GM12878 (cell line): ENCODE measurements at regions of chr12 and their contacts with region 1.

Region 1: GRCh38 chr12:100827901-100828520 is 33.4 kb downstream of the ANO4 start:
- DNase-seq: no peak
- ATAC-seq: peak; percentile 63
- H3K4me3 ChIP-seq: no peak overlapping the region
- H3K27ac ChIP-seq: no peak overlapping the region
- H3K4me1 ChIP-seq: no peaks in the 10 kb centered on the region
- H3K27me3 ChIP-seq: no peaks in the 10 kb centered on the region
- CTCF ChIP-seq: peak; percentile 64 to 78 (median 74)
- EP300 ChIP-seq: no peak
- POLR2A ChIP-seq: no peak
- RAD21 ChIP-seq: peak; percentile 85

Region 2: GRCh38 chr12:100987552-100988521 is 159.8 kb after region 1 on chr12:
- CTCF ChIA-PET with region 1: no interaction called
- POLR2A ChIA-PET with region 1: no interaction called
- RAD21 ChIA-PET with region 1: no interaction called
- SMC1A ChIA-PET with region 1: no interaction called
- in situ Hi-C with region 1: no loop called
- intact Hi-C with region 1: loop called (anchors 5 kb)
- DNase-seq: peak; percentile 83
- ATAC-seq: peak; percentile 96
- H3K4me3 ChIP-seq: no peak overlapping the region
- H3K27ac ChIP-seq: no peak overlapping the region
- H3K4me1 ChIP-seq: peaks cover 11% of the 10 kb centered on the region; the same call in 1 of the 2 replicates
- H3K27me3 ChIP-seq: no peaks in the 10 kb centered on the region; a peak in 1 of 4 replicates
- CTCF ChIP-seq: peak; percentile 43 to 73 (median 51)
- EP300 ChIP-seq: peak; percentile 73 to 89
- POLR2A ChIP-seq: no peak
- RAD21 ChIP-seq: peak; percentile 58

Region 3: DNA sequence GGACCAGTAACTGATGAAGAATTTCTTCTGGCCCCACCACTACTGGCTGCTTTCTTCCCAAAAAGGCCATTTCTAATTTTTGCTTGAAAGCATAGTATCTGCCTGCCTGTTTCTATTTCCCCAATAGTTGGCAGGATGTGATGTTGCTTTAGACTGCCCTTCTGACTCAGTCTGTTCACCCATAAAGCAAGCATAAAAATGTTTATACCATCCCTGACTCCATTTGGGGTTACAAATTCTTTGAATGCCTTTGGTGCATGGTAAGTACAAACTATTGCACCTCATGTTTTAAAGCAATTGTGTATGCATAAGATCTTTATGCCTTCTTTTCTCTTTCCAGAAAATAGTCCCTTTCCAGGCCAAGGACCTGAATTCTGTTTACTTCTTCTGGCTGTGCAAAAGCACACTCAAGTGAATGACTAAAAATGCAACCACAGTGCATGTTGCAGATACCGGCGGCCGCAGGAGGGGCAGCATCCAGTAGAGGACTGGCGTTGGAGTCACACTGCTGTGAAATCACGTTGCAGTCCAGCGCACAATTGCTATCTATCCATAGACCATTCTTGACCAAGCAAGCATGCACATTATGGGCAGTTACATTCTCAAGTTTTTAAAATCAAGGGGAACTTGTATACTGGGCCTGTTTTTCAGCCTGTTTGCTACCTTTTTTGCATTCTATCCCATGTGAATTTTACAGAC is 299.7 kb after region 1 on chr12:
- CTCF ChIA-PET with region 1: no interaction called
- POLR2A ChIA-PET with region 1: no interaction called
- RAD21 ChIA-PET with region 1: no interaction called
- SMC1A ChIA-PET with region 1: no interaction called
- in situ Hi-C with region 1: no loop called
- intact Hi-C with region 1: loop called (anchors 5 kb)
- DNase-seq: no peak
- ATAC-seq: no peak
- H3K4me3 ChIP-seq: no peak overlapping the region
- H3K27ac ChIP-seq: no peak overlapping the region
- H3K4me1 ChIP-seq: no peaks in the 10 kb centered on the region
- H3K27me3 ChIP-seq: no peaks in the 10 kb centered on the region
- CTCF ChIP-seq: no peak
- EP300 ChIP-seq: no peak
- POLR2A ChIP-seq: no peak
- RAD21 ChIP-seq: no peak